Activated CD4-positive, alpha-beta T cell treated with anti-CD3 and anti-CD28 coated beads, Interleukin-2, amount 10 ng/mL, durations not matched to agents 24 days and 14 days (primary cell): ENCODE measurements at regions of chr2 and their contacts with region 1.

Region 1: GRCh38 chr2:207166039-207166348 is 246 bp upstream of the KLF7 start:
- DNase-seq: peak; percentile 99
- H3K4me3 Mint-ChIP-seq: peak overlapping the region; percentile 98
- H3K27ac Mint-ChIP-seq: peak overlapping the region; percentile 96
- H3K4me1 Mint-ChIP-seq: peaks cover 46% of the 10 kb centered on the region
- H3K27me3 Mint-ChIP-seq: no peaks in the 10 kb centered on the region

Region 2: GRCh38 chr2:207046724-207047123 is 119.3 kb before region 1 on chr2:
- intact Hi-C with region 1: loop called (anchors 2 kb)
- DNase-seq: peak; percentile 80
- H3K4me3 Mint-ChIP-seq: peak overlapping the region; percentile 28
- H3K27ac Mint-ChIP-seq: peak overlapping the region; percentile 31
- H3K4me1 Mint-ChIP-seq: peaks cover 12% of the 10 kb centered on the region
- H3K27me3 Mint-ChIP-seq: peaks cover 6% of the 10 kb centered on the region

Region 3: GRCh38 chr2:207143215-207144172 is 22.5 kb before region 1 on chr2:
- intact Hi-C with region 1: loop called (anchors 1 kb)
- DNase-seq: peak; percentile 88
- H3K4me3 Mint-ChIP-seq: peak overlapping the region; percentile 82
- H3K27ac Mint-ChIP-seq: peak overlapping the region; percentile 81
- H3K4me1 Mint-ChIP-seq: peaks cover 56% of the 10 kb centered on the region
- H3K27me3 Mint-ChIP-seq: peaks cover 2% of the 10 kb centered on the region

Region 4: GRCh38 chr2:207223051-207223450 is 57.1 kb after region 1 on chr2:
- intact Hi-C with region 1: loop called (anchors 1 kb)
- DNase-seq: peak; percentile 59
- H3K4me3 Mint-ChIP-seq: no peak overlapping the region
- H3K27ac Mint-ChIP-seq: peak overlapping the region; percentile 59
- H3K4me1 Mint-ChIP-seq: peaks cover 35% of the 10 kb centered on the region
- H3K27me3 Mint-ChIP-seq: peaks cover 6% of the 10 kb centered on the region

Region 5: GRCh38 chr2:207288628-207289027 is 122.6 kb after region 1 on chr2:
- intact Hi-C with region 1: loop called (anchors 1 kb)
- DNase-seq: no peak
- H3K4me3 Mint-ChIP-seq: no peak overlapping the region
- H3K27ac Mint-ChIP-seq: peak overlapping the region; percentile 20
- H3K4me1 Mint-ChIP-seq: peaks cover 39% of the 10 kb centered on the region
- H3K27me3 Mint-ChIP-seq: no peaks in the 10 kb centered on the region

Region 6: GRCh38 chr2:207473049-207473930 is 307.3 kb after region 1 on chr2:
- intact Hi-C with region 1: loop called (anchors 2 kb)
- DNase-seq: peak; percentile 86
- H3K4me3 Mint-ChIP-seq: no peak overlapping the region
- H3K27ac Mint-ChIP-seq: peak overlapping the region; percentile 26
- H3K4me1 Mint-ChIP-seq: peaks cover 17% of the 10 kb centered on the region
- H3K27me3 Mint-ChIP-seq: peaks cover 2% of the 10 kb centered on the region

Region 7: DNA sequence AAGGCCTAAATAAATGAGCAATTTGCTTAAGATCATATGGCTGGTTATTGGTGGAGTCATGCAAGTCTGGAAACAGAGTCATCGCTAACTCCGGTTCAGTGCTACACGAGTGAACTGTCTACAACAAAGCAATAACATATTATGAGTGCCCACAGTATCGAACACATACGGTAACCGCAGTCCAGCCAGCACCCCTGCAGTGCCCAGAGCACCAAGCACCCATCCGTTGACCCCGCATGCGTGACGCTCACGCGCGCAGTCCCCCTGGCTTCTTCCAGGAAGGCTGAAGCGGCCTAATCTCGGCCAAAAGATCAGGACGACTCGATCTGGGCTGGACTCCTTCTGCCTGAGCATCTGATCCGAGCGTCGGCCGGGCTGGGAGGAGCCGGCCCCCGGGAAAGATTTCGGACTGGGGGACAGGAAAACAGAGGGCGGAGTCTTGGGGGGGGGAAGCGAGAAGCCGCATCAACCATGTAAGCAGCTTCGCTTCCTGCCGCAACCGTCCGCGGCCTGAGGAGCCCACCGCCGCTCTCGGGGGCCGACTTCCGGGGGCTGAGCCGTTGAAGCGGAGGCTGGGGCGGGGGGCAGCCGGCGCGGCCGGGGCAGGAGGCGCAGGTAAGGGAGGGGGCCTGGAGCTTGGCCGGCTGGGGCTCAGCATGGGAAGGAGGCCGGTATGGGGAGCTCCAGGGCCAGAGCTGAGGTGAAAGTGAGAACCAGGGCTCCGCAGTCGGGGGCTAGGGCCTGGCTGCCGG is 1100.0 kb after region 1 on chr2 and contains the start of gene PIKFYVE:
- intact Hi-C with region 1: loop called (anchors 5 kb)
- DNase-seq: peak; percentile 97
- H3K4me3 Mint-ChIP-seq: peak within 1 kb of the TSS; percentile 95
- H3K27ac Mint-ChIP-seq: peak within 1 kb of the TSS; percentile 94
- H3K4me1 Mint-ChIP-seq: peaks cover 36% of the 10 kb centered on the region
- H3K27me3 Mint-ChIP-seq: no peaks in the 10 kb centered on the region
- total RNA-seq, gene PIKFYVE: 27.3 and 29.4 TPM in 2 replicates